ENCODE measurements at regions of chr14 and their contacts with region 1.

Region 1: DNA sequence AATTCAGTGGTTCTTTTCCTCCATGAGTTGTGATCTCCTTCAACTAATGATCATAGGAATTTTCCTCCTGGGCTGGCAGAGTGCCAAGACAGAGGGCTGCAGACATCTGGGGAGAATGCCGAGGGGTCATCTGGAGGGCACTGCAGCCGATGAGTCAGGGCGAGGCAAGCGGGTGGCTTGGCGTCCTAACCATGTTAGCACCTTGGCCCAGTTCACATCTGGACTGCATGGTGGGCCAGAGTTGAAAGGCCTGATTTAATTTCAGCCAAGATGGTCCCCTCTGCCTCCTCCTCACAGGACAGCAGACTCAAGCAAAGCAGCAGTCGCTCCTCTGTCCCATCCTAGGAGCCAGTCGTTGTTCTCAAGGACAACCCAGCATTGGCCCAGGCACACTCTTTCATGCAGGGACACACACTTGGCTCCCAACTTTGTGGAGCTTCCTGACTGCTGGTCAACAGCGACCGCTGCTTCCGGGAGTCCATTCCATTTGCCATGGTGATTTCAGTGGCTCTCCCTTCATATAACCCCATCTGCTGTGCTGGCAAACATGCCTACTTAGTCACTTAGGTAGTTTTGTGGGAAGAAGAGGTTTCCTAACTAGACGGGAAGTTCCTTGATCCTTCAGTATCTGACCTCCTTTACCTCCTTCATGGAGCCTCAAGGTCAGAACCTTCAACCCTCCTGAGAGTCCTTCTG is 161.8 kb downstream of the TTC8 start:
- DNase-seq: peak; percentile 74
- ATAC-seq: no peak
- H3K4me3 ChIP-seq: no peak overlapping the region
- H3K27ac ChIP-seq: peak overlapping the region; percentile 95
- H3K4me1 ChIP-seq: peaks cover 34% of the 10 kb centered on the region
- H3K27me3 ChIP-seq: no peaks in the 10 kb centered on the region
- CTCF ChIP-seq: no peak

Region 2: DNA sequence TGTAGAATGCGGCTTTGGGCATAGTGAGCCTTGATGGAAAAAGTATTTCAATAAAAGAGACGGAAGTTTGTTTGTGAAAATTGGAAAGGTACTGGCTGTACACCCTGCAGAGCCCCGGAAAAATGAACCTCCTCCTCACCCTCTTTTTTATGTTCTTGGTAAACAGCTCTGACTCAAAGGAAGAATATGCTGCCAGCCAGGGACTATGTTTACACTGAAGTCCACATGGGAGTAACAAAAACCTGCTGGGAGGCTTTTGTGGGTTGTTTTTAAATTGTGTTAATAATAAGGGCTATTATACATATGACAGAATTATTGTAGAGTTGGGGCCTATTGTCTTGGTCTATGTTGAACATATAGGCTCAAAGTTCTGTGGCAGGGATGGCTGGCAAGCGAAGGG is 91.2 kb before region 1 on chr14:
- CTCF ChIA-PET with region 1: no interaction called
- POLR2A ChIA-PET with region 1: no interaction called
- intact Hi-C with region 1: loop called (anchors 1 kb)
- DNase-seq: peak; percentile 92
- ATAC-seq: peak; percentile 95
- H3K4me3 ChIP-seq: no peak overlapping the region
- H3K27ac ChIP-seq: peak overlapping the region; percentile 71
- H3K4me1 ChIP-seq: peaks cover 25% of the 10 kb centered on the region
- H3K27me3 ChIP-seq: no peaks in the 10 kb centered on the region
- CTCF ChIP-seq: no peak

Region 3: DNA sequence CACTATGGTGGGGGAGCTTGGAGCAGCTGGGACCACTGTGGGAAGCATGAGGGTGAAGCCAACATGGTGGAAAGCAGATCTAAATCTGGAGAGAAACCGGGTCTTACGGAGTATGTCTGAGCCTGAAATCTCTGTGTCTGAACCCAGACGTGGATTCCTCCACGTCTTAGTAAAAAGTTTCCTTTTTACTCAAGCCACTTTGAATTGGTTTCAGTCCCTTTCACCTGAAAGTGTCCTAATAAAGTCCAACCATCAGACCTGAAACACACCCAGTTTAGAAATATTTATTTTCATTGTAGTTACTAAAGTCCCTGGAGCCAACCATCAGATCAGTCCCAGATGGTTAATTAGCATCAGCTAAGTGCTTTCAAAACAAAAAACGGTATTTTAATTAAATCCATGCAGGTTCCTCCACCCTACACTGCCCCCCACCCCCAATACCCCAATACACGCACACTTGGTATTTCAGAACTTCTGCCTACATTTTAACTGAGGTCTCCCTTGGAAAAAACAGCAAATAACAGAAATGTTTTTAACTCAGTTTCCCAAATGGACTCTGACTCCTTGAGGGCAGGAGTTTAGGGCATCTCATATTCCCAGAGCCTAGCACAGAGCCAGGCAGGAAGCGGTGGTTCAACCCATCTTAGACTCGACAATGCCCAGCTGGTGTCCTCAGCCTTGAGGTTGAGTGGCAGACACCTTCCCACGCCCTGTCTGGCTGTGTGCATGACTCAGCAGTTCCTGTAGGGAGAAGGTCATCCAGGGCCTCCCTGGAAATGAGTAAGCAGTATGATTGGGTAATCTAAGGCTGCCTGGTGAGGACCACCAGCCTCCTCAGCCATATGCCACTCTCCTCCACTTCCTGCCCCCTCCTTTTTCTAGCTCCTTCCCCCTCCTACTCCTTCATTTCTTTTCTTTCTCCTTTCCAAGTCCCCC is 14.0 kb after region 1 on chr14:
- CTCF ChIA-PET with region 1: no interaction called
- POLR2A ChIA-PET with region 1: no interaction called
- intact Hi-C with region 1: loop called (anchors 2 kb)
- DNase-seq: peak; percentile 94
- ATAC-seq: peak; percentile 93
- H3K4me3 ChIP-seq: no peak overlapping the region
- H3K27ac ChIP-seq: peak overlapping the region; percentile 89
- H3K4me1 ChIP-seq: peaks cover 36% of the 10 kb centered on the region
- H3K27me3 ChIP-seq: no peaks in the 10 kb centered on the region
- CTCF ChIP-seq: no peak

Measured in PC-3 (cell line).